ENCODE measurements at regions of chr11 and their contacts with region 1.

Region 1: DNA sequence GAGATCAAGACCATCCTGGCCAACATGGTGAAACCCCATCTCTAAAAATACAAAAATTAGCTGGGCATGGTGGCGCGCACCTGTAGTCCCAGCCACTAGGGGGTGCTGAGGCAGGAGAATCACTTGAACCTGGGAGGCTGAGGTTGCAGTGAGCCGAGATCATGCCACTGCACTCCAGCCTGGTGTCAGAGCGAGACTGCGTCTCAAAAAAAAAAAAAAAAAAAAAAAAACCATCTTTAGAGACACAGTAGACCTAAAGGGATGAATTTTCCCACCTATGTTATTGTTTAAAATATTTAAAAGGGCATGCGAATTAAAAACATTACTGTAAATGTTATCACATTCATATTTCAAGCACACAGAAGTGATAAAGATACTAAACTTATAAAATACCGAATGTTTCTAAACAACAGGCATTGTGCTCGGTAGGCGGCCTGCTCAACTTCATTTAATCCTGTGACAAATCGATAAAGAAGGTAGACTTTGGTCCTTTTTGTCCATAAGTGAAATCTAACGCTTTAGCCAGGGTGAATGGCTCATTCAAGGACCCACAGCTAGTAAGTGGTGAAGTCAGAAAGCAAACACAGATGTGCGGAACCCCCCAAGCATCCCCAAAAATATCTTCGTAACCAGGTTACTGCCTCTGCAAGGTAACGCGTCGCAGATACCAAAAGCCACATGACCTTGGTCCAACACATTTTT is 16.1 kb downstream of the NCAPD3 start:
- DNase-seq: no peak
- H3K4me3 ChIP-seq: no peak overlapping the region; a peak in 1 of 4 replicates
- H3K27ac ChIP-seq: no peak overlapping the region
- H3K4me1 ChIP-seq: peaks cover 0 to 14% of the 10 kb centered on the region in 2 experiments; a peak in 2 of 4 replicates
- H3K27me3 ChIP-seq: no peaks in the 10 kb centered on the region
- CTCF ChIP-seq: peak; percentile 82
- EP300 ChIP-seq: no peak
- RAD21 ChIP-seq: peak; percentile 39

Region 2: DNA sequence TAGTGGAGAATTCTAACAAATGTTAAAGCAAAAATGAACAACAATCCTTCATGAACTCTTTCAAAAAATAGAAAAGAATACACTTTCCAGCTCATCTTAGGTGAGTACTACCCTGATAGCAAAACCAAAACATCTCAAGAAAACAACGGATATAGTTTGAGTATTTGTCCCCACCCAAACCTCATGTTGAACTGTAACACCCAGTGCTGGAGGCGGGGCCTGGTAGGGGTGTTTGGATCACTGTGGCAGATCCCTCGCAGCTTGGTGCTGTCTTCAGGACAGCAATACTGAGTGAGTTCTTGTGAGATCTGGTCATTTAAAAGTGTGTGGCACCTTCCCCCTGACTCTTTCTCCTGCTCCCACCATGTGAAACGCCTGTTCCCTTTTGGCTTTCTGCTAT is 10.9 kb before region 1 on chr11:
- CTCF ChIA-PET with region 1: interaction called, 11 read pairs
- POLR2A ChIA-PET with region 1: no interaction called
- DNase-seq: no peak
- H3K4me3 ChIP-seq: no peak overlapping the region
- H3K27ac ChIP-seq: no peak overlapping the region
- H3K4me1 ChIP-seq: no peaks in the 10 kb centered on the region; a peak in 1 of 4 replicates
- H3K27me3 ChIP-seq: no peaks in the 10 kb centered on the region
- CTCF ChIP-seq: no peak
- EP300 ChIP-seq: no peak
- RAD21 ChIP-seq: no peak

Region 3: DNA sequence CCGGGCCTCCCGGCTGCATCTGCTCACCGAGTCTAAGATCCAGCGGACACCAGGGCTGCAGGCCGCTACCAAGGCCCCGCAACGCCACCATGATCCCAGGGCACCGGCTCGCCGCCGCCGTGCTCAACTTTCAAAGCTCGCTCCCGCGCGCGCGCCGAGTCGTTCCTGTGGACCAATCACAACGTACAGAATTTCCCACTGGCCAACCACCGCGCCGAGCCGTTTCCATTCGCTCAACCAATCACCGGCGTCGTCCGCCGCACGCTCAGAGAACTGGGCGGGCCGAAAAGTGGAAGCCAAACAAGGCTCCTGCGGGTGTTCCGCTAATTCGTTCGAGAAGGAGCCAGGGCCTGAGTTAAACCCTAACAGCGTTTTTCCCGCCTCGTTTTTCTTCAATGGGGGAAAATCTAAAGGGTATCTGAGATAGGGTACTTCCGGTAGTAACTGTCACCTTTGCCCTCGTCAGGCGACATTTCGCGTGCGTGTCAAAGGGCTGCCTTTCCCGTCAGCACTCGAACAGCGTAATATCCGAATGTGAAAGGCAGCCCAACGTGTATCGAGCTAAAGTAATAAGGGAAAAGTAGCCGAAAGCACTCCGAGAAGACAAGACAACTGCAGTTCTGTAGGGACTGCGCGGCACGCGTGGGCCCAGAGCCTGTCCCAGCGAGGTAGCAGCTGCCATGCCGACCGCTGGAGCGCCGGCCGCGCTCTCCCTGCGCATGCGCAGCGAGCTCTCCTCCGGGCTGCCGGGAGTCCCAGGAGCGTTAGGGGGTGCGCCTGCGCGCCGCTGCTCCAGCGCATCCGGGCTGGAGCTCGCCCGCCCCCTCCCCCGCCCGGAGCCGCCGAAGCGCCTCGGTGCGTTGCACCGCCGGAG is 16.4 kb after region 1 on chr11 and contains the starts of genes NCAPD3 and VPS26B:
- CTCF ChIA-PET with region 1: interaction called, 10 read pairs
- POLR2A ChIA-PET with region 1: no interaction called
- DNase-seq: peak; percentile 99
- H3K4me3 ChIP-seq: peak within 1 kb of the TSS; percentile 79 to 94
- H3K27ac ChIP-seq: peak within 1 kb of the TSS; percentile 85 to 95
- H3K4me1 ChIP-seq: peaks cover 6 to 32% of the 10 kb centered on the region in 2 experiments; a peak in 3 of 4 replicates
- H3K27me3 ChIP-seq: no peaks in the 10 kb centered on the region
- CTCF ChIP-seq: no peak
- EP300 ChIP-seq: peak in 1 of 2 experiments; percentile 5; a peak in 1 of 4 replicates
- RAD21 ChIP-seq: no peak
- polyA plus RNA-seq, gene NCAPD3: 19.5 and 22.0 TPM in 2 replicates
- polyA plus RNA-seq, gene VPS26B: 53.0 and 56.0 TPM in 2 replicates

Region 4: DNA sequence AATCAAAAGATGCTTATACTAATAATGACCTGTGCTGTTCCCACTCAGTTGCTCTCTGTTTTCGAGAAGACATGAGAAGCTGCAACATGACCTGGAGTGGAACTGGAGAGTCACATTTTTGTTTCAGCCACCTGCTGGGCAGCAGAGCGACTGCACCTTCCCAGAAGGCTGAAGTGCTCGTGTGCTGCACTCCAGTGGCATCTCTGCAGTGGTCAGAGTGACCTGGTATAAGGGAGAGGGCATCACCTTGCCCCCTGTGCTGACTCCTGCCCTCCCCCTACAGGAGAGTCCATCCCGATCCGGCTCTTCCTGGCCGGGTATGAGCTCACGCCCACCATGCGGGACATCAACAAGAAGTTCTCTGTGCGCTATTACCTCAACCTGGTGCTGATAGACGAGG is 37.0 kb after region 1 on chr11:
- CTCF ChIA-PET with region 1: interaction called, 14 read pairs
- POLR2A ChIA-PET with region 1: no interaction called
- DNase-seq: peak; percentile 59
- H3K4me3 ChIP-seq: no peak overlapping the region
- H3K27ac ChIP-seq: no peak overlapping the region
- H3K4me1 ChIP-seq: no peaks in the 10 kb centered on the region; a peak in 1 of 4 replicates
- H3K27me3 ChIP-seq: no peaks in the 10 kb centered on the region
- CTCF ChIP-seq: peak; percentile 58
- EP300 ChIP-seq: no peak
- RAD21 ChIP-seq: peak; percentile 67

Region 5: DNA sequence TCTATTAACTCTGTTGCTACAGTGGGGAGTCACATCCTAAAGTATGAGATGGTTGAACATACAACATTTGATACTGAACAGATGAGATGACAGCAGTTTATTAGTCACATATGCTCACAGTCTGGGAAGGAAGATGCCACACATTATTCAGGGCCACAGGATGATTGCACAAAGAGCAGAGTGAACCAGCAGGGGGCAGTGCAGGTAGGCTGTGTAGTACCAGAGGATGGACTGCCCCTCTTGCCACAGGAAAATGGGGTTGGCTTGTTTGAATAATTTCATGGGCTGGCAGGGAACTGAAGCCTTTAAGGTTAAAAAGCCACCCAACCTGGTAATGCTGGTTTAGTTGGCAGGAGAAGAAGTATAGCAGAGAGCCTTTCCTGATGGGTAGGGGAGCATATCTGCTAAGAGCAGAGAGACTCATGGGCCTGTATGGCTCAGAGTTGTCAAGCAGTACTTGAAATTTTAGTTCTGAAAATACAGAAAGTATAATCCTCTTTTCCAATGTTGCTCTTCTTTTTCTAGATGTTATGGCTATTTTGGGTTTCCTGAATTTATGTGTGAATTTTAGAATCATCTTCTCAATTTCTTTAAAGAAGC is 384.8 kb after region 1 on chr11:
- CTCF ChIA-PET with region 1: no interaction called
- POLR2A ChIA-PET with region 1: no interaction called
- DNase-seq: peak; percentile 51
- H3K4me3 ChIP-seq: no peak overlapping the region; a peak in 1 of 4 replicates
- H3K27ac ChIP-seq: no peak overlapping the region
- H3K4me1 ChIP-seq: no peaks in the 10 kb centered on the region
- H3K27me3 ChIP-seq: no peaks in the 10 kb centered on the region
- CTCF ChIP-seq: no peak; the same call in 1 of the 2 replicates
- EP300 ChIP-seq: no peak
- RAD21 ChIP-seq: peak; percentile 61